ENCODE measurements at regions of chr7 and their contacts with region 1.

Region 1: GRCh38 chr7:44565097-44565794 is 8.5 kb downstream of the DDX56 start:
- DNase-seq: peak in 1 of 2 donors; percentile 92
- H3K4me3 ChIP-seq: no peak overlapping the region
- CTCF ChIP-seq: peak in 1 of 3 donors; percentile 62
- POLR2A ChIP-seq: no peak

Region 2: DNA sequence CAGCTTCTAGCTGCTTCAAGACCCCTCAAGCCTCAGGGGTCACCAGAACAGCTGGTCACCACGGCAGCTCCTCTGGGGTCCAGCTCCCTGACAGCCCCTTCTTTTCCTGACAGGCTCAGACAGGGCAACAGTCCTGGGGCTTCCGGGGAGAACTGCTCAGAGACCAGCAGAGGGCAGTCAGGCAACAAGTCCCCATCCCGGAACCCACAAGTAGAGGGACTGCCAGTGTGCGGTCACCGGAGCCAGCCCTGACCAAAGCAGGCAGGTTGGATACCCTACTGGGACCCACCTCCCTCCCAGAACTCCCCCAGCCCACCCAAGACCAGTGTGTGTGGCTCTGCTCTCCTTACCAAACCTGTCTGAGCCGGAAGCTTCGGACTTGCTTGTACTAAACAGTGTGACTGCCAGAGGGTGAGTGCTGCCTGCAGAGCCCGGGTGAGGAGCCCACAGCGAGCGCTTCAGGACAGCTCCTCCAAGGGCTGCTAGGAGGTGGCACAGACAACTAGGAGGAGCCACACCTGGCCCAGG is 324.2 kb before region 1 on chr7:
- intact Hi-C with region 1: loop called (anchors 5 kb)
- DNase-seq: peak; percentile 61 to 91
- H3K4me3 ChIP-seq: no peak overlapping the region
- CTCF ChIP-seq: no peak
- POLR2A ChIP-seq: no peak

Region 3: DNA sequence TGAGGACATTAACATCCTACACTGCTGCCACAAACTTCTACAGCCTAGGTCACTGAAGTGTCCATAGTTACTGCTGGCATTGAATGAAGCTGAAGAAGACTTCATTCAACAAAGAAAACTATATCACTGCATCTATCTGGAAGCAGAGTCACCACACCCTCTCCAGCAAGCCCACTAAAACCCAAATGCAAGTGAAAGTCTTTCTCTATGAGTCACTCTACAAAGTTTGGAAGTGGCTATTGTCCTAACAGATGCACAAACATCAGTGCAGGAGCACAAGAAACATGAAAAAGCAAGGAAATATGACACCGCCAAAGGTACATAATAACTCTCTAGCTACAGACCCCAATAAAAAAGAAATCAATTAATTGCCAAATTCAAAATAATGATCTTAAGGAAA is 196.4 kb before region 1 on chr7:
- intact Hi-C with region 1: no loop called
- DNase-seq: no peak
- H3K4me3 ChIP-seq: no peak overlapping the region
- CTCF ChIP-seq: no peak
- POLR2A ChIP-seq: no peak

Region 4: GRCh38 chr7:44490351-44491200 is 74.7 kb before region 1 on chr7 and contains the start of gene NUDCD3:
- intact Hi-C with region 1: loop called (anchors 10 kb)
- DNase-seq: peak; percentile 74 to 94
- H3K4me3 ChIP-seq: peak within 1 kb of the TSS; percentile 96
- CTCF ChIP-seq: no peak
- POLR2A ChIP-seq: no peak
- total RNA-seq, gene NUDCD3: 53.3 to 87.9 (median 73.2) TPM

Region 5: DNA sequence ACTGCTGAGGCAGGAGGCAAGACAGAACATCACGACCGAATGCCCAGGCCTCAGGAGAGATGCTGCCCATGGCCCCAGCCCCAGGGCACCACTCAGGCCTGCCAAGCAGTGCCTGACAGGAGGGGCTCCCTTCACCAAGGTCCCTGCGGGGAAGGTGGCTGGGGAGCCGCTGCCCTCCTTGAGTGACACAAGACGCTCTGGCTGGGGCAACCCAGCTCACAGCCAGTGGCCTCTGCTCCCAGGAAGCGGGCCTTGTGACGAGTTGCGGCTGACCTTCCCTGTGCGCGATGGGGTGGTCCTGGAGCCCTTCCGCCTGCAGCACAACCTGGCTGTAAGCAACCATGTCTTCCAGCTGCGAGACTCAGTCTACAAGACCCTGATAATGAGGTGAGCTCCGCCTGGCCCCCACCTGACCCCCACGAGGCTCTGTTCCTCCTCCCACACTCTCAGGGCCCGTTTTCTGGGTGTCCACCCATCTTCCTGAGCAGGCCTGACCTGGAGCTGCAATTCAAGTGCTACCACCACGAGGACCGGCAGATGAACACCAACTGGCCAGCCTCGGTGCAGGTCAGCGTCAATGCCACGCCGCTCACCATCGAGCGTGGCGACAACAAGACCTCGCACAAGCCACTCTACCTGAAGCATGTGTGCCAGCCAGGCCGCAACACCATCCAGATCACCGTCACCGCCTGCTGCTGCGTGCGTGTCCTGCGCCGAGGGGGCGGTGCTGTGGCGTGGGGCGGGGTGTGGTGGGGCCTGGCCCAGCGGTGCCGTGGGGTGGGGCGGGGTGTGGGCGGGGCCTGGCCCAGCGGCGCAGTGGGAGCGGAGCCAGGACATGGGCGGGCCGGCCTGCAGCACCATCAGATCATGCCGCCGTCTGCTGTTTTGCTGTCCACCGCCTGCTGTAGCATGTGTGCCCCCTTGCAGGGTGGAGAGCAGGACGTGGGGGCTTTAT is 196.2 kb after region 1 on chr7:
- intact Hi-C with region 1: no loop called
- DNase-seq: no peak
- H3K4me3 ChIP-seq: no peak overlapping the region
- CTCF ChIP-seq: no peak
- POLR2A ChIP-seq: no peak

Measured in lower leg skin (tissue), 4 donors.